CD8-positive, alpha-beta memory T cell (primary cell): ENCODE measurements at regions of chr12 and their contacts with region 1.

Region 1: DNA sequence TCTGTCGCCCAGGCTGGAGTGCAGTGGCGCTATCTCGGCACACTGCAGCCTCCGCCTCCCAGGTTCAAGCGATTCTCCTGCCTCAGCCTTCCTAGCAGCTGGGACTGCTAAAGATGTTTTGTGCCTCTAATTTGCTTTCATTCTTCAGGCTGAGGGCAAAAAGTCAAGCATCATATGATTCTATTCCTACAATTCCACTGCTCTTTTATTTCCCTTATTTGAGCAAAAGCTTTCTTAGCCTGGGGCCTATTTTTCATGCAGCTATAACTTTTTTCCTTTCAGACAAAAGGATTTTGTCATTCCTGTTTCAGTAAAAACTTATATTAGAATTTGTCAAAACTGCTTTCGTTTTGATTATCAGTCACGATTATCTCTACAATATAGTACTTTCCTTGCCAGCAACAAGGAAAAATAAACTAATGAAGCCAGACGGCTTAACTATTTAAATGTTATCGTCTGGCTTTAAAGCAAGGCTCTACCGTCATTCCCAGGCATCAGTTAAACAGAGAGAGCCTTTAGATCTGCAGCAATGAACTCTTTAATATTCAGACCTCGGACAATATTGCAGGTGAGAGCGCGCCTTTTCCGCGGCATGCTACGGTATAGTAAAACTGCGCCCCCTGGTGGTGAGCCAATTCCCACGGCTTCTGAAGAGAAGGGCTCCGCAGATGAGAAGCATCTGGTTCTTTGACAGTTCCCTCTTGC is 1.4 kb upstream of the SLC2A13 start:
- DNase-seq: peak; percentile 77 to 92 (median 83)
- H3K4me3 ChIP-seq: peak overlapping the region; percentile 81
- H3K4me3 Mint-ChIP-seq: peak overlapping the region; percentile 86 to 95 (median 91)
- H3K27ac ChIP-seq: peak overlapping the region; percentile 30
- H3K27ac Mint-ChIP-seq: peak overlapping the region; percentile 74 to 92 (median 86)
- H3K4me1 ChIP-seq: peaks cover 23% of the 10 kb centered on the region
- H3K4me1 Mint-ChIP-seq: peaks cover 31 to 37% (median 37%) of the 10 kb centered on the region in 3 donors
- H3K27me3 ChIP-seq: no peaks in the 10 kb centered on the region
- H3K27me3 Mint-ChIP-seq: no peaks in the 10 kb centered on the region

Region 2: DNA sequence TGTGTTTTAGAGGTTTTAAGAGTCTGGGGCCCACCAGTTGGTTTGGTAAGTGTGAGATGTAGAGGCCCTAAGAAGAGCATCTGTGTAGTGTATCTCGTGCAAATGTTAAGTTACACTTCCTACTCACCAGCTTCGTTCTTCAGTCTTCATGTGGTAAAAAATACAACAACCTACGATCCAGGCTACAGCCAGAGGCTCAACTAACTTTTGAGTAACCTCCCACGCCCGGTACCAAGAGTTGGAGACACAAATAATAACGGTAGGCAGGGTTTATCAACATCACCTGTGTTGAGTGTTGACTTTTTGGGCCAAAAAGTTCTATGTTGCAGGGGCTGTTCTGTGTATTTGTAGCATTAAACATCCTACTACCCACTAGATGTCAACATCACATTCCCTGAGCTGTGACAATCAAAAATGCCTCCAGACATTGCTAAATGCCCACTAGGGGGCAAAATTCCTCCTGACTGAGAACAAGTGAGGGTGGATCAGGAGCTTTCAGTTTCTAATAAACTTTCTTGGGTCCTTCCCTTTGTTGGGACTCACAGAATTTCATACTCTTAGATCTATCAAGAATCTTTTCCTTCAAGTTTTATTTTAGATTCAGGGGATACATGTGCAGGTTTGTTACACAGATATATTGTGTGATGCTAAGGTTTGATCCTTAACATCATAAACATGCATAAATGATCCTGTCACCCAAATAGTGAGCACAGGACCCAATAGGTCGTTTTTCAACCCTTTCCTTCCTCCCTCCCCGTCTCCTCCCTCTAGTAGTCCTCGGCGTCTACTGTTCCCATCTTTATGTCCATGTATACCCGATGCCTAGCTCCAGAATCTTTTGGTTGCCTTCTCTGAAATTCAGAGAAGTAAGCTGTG is 96.1 kb before region 1 on chr12:
- CTCF ChIA-PET with region 1: interaction called, 117 read pairs
- POLR2A ChIA-PET with region 1: interaction called, 9 read pairs
- DNase-seq: peak; percentile 32 to 72 (median 55)
- H3K4me3 ChIP-seq: peak overlapping the region; percentile 27
- H3K4me3 Mint-ChIP-seq: peak overlapping the region; percentile 32 to 88 (median 62)
- H3K27ac ChIP-seq: no peak overlapping the region
- H3K27ac Mint-ChIP-seq: peak overlapping the region in 5 of 8 donors; percentile 5 to 91 (median 54)
- H3K4me1 ChIP-seq: peaks cover 4% of the 10 kb centered on the region
- H3K4me1 Mint-ChIP-seq: peaks cover 11 to 27% (median 25%) of the 10 kb centered on the region in 3 donors
- H3K27me3 ChIP-seq: no peaks in the 10 kb centered on the region
- H3K27me3 Mint-ChIP-seq: no peaks in the 10 kb centered on the region

Region 3: GRCh38 chr12:40117818-40118217 is 10.6 kb after region 1 on chr12:
- CTCF ChIA-PET with region 1: interaction called, 24 read pairs
- POLR2A ChIA-PET with region 1: no interaction called
- DNase-seq: no peak
- H3K4me3 ChIP-seq: no peak overlapping the region
- H3K4me3 Mint-ChIP-seq: peak overlapping the region in 1 of 7 donors; percentile 32
- H3K27ac ChIP-seq: no peak overlapping the region
- H3K27ac Mint-ChIP-seq: no peak overlapping the region
- H3K4me1 ChIP-seq: no peaks in the 10 kb centered on the region
- H3K4me1 Mint-ChIP-seq: peaks cover 0 to 6% (median 6%) of the 10 kb centered on the region in 3 donors
- H3K27me3 ChIP-seq: no peaks in the 10 kb centered on the region
- H3K27me3 Mint-ChIP-seq: peaks cover 0 to 2% of the 10 kb centered on the region in 2 donors